Adrenal gland (tissue), 19 donors: ENCODE measurements at regions of chr4 and their contacts with region 1.

Region 1: GRCh38 chr4:10535912-10536311 is 78.7 kb upstream of the ZNF518B start:
- DNase-seq: no peak
- H3K4me3 ChIP-seq: no peak overlapping the region
- H3K27ac ChIP-seq: no peak overlapping the region
- H3K4me1 ChIP-seq: peaks cover 0 to 5% of the 10 kb centered on the region in 2 donors
- H3K27me3 ChIP-seq: no peaks in the 10 kb centered on the region
- CTCF ChIP-seq: no peak
- POLR2A ChIP-seq: no peak

Region 2: GRCh38 chr4:10157478-10158332 is 378.2 kb before region 1 on chr4:
- intact Hi-C with region 1: loop called in 1 of 2 experiments (anchors 5 kb)
- DNase-seq: peak; percentile 50 to 84 (median 68)
- H3K4me3 ChIP-seq: no peak overlapping the region
- H3K27ac ChIP-seq: no peak overlapping the region
- H3K4me1 ChIP-seq: no peaks in the 10 kb centered on the region
- H3K27me3 ChIP-seq: no peaks in the 10 kb centered on the region
- CTCF ChIP-seq: peak; percentile 53 to 81 (median 77)
- POLR2A ChIP-seq: no peak

Region 3: DNA sequence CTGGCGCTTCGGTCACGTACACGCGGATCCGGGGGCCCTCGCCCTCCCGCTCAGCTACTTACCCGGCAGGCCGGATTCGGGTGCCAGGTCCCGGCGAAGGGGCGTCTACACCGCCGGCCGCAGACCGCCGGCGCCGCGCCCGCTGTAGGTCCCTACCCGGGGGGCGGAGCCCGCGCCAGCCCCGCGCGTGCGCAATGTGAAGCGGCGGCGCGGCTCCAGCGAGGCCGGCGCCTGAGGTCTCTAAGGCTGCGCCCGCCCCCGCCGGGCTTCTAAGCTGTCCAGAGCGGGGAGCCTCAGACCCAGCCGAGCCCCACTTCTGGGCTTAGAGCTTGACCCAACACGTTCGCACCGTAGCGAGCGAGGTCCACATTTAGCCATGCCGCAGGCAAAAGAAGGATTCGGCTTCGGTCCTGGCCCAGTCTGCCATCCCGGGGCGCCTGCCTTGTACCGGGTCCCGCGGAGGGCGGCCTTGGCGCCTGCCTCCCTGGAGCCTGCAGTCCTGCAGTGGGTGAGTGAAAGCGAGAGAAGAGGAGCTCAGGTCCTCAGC is 78.6 kb before region 1 on chr4 and contains the start of gene ZNF518B:
- intact Hi-C with region 1: loop called (anchors 5 to 10 kb)
- DNase-seq: peak; percentile 46 to 74 (median 62)
- H3K4me3 ChIP-seq: peak within 1 kb of the TSS in 3 of 4 donors; percentile 30 to 89 (median 40)
- H3K27ac ChIP-seq: peak within 1 kb of the TSS in 3 of 5 donors; percentile 11 to 81 (median 52)
- H3K4me1 ChIP-seq: peaks cover 5 to 6% of the 10 kb centered on the region in 2 donors
- H3K27me3 ChIP-seq: no peaks in the 10 kb centered on the region
- CTCF ChIP-seq: no peak
- POLR2A ChIP-seq: peak in 1 of 2 donors; percentile 37
- total RNA-seq, gene ZNF518B: 15.0 to 45.1 (median 23.2) TPM

Region 4: GRCh38 chr4:10925996-10926395 is 390.1 kb after region 1 on chr4:
- intact Hi-C with region 1: no loop called
- DNase-seq: no peak
- H3K4me3 ChIP-seq: no peak overlapping the region
- H3K27ac ChIP-seq: no peak overlapping the region
- H3K4me1 ChIP-seq: no peaks in the 10 kb centered on the region
- H3K27me3 ChIP-seq: no peaks in the 10 kb centered on the region
- CTCF ChIP-seq: no peak
- POLR2A ChIP-seq: no peak